ENCODE measurements at regions of chr6 and their contacts with region 1.

Region 1: GRCh38 chr6:31680840-31681671 is at the start of gene LY6G5C:
- DNase-seq: peak; percentile 96
- H3K4me3 ChIP-seq: peak within 1 kb of the TSS; percentile 52 to 65 (median 58)
- H3K27ac ChIP-seq: peak within 1 kb of the TSS; percentile 68 to 84 (median 80)
- H3K4me1 ChIP-seq: peaks cover 12 to 33% (median 30%) of the 10 kb centered on the region in 4 donors
- H3K27me3 ChIP-seq: no peaks in the 10 kb centered on the region
- CTCF ChIP-seq: peak; percentile 70 to 91 (median 77)
- EP300 ChIP-seq: no peak
- POLR2A ChIP-seq: no peak
- total RNA-seq, gene LY6G5C: 2.0 to 2.9 TPM in 2 of 4 donors, not detected in the others

Region 2: DNA sequence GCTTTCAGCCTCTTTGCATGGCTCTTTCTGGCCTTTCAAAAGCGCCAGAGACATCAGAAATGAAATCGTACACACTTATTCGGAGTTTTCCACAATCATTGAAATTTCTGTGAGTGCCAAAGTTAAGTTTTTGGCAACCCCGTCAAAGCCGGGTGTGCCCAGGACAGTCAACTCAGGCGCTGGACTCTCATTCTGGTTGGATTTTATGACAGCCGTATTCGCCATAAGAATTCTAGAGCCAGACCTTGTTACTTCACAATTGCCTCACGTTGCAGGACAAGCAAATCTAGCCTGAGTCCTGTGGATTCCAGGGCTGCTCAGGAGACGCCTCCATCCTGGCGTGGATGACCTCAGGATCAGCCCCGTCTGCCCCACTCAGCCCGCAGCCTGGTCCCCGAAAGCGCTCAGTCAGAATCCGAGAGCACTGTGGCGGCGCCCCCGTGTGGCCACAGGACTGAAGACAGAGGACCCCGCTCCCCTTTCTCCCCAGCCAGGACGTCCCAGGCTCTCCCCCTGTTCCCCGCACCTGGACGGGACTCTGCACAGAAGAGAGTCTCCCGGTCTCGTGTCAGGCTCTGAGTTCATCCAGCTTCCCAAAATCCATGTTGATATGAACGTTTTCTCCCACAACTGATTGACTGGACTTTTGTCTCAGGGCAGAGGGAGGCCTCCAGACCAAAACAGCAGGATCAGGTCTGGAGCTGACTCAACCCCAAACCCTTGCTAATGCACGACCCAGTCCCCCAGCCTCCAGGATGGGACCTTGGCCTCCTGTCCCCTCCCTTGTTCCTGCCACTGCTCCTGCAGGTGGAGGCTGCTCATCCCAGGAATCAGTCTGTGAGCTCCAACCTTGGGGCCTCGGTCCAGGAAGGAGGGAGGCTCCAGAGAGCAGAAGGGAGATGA is 239.4 kb before region 1 on chr6:
- intact Hi-C with region 1: no loop called
- DNase-seq: peak; percentile 96
- H3K4me3 ChIP-seq: peak overlapping the region in 3 of 4 donors; percentile 19 to 47 (median 23)
- H3K27ac ChIP-seq: no peak overlapping the region
- H3K4me1 ChIP-seq: peaks cover 8 to 11% (median 9%) of the 10 kb centered on the region in 4 donors
- H3K27me3 ChIP-seq: peaks cover 0 to 3% (median 0%) of the 10 kb centered on the region in 4 donors
- CTCF ChIP-seq: peak; percentile 75 to 92 (median 79)
- EP300 ChIP-seq: no peak
- POLR2A ChIP-seq: no peak

Region 3: DNA sequence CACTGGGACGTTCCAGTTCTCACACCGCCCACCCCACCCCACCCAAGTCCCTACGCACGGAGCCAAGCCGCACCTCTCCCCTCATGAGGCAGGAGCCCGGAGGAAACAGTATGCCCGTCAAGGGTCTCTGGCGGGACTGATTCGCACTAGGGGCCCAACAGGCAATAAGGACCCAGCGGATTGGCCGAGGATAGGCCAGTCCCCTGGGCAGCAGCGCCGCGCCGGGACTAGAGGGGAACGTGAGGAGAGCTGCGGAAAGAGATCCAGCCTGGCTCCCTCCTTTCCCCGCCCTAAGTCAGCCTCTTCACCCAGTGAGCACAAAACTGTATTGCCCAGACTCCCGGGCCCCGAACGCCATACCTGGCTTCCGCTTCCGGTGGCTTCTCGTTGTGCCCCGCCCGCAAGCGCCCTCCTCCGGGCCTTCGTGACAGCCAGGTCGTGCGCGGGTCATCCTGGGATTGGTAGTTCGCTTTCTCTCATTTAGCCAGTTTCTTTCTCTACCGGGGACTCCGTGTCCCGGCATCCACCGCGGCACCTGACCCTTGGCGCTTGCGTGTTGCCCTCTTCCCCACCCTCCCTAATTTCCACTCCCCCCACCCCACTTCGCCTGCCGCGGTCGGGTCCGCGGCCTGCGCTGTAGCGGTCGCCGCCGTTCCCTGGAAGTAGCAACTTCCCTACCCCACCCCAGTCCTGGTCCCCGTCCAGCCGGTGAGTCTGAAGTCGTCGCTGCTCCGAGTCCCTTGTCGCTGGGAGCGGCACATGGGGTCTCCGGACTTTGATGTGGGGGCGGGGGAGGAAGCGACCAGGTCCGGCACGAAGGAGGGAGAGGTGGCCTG is 15.3 kb before region 1 on chr6 and contains the start of gene CSNK2B:
- intact Hi-C with region 1: no loop called
- DNase-seq: peak; percentile 100
- H3K4me3 ChIP-seq: peak within 1 kb of the TSS; percentile 66 to 93 (median 78)
- H3K27ac ChIP-seq: peak within 1 kb of the TSS; percentile 95 to 99 (median 98)
- H3K4me1 ChIP-seq: peaks cover 54 to 71% (median 62%) of the 10 kb centered on the region in 4 donors
- H3K27me3 ChIP-seq: no peaks in the 10 kb centered on the region
- CTCF ChIP-seq: no peak
- EP300 ChIP-seq: no peak
- POLR2A ChIP-seq: peak; percentile 65
- total RNA-seq, gene CSNK2B: 132 to 188 (median 153) TPM

Region 4: GRCh38 chr6:31717499-31718222 is 36.6 kb after region 1 on chr6:
- intact Hi-C with region 1: no loop called
- DNase-seq: no peak
- H3K4me3 ChIP-seq: no peak overlapping the region
- H3K27ac ChIP-seq: no peak overlapping the region
- H3K4me1 ChIP-seq: no peaks in the 10 kb centered on the region
- H3K27me3 ChIP-seq: no peaks in the 10 kb centered on the region
- CTCF ChIP-seq: no peak
- EP300 ChIP-seq: no peak
- POLR2A ChIP-seq: no peak

Region 5: GRCh38 chr6:31769684-31770371 is 88.8 kb after region 1 on chr6:
- intact Hi-C with region 1: loop called (anchors 2 kb)
- DNase-seq: no peak
- H3K4me3 ChIP-seq: no peak overlapping the region
- H3K27ac ChIP-seq: no peak overlapping the region
- H3K4me1 ChIP-seq: peaks cover 0 to 25% (median 16%) of the 10 kb centered on the region in 4 donors
- H3K27me3 ChIP-seq: peaks cover 0 to 3% (median 0%) of the 10 kb centered on the region in 4 donors
- CTCF ChIP-seq: peak; percentile 74 to 93 (median 86)
- EP300 ChIP-seq: no peak
- POLR2A ChIP-seq: no peak

Region 6: GRCh38 chr6:31862344-31863227 is 181.5 kb after region 1 on chr6 and contains the start of gene NEU1:
- intact Hi-C with region 1: loop called (anchors 10 kb)
- DNase-seq: peak; percentile 100
- H3K4me3 ChIP-seq: peak within 1 kb of the TSS; percentile 76 to 92 (median 84)
- H3K27ac ChIP-seq: peak within 1 kb of the TSS; percentile 89 to 95 (median 92)
- H3K4me1 ChIP-seq: peaks cover 20 to 35% (median 27%) of the 10 kb centered on the region in 4 donors
- H3K27me3 ChIP-seq: no peaks in the 10 kb centered on the region
- CTCF ChIP-seq: no peak
- EP300 ChIP-seq: no peak
- POLR2A ChIP-seq: peak; percentile 93
- total RNA-seq, gene NEU1: 24.9 to 39.6 (median 34.9) TPM